Activated CD4-positive, alpha-beta T cell treated with anti-CD3 and anti-CD28 coated beads, Interleukin-2, amount 10 ng/mL, durations not matched to agents 24 days and 14 days (primary cell): ENCODE measurements at regions of chr11 and their contacts with region 1.

Region 1: GRCh38 chr11:16820324-16821092 is 82.1 kb downstream of the C11orf58 start:
- DNase-seq: peak; percentile 77
- H3K4me3 Mint-ChIP-seq: no peak overlapping the region
- H3K27ac Mint-ChIP-seq: no peak overlapping the region
- H3K4me1 Mint-ChIP-seq: peaks cover 10% of the 10 kb centered on the region
- H3K27me3 Mint-ChIP-seq: no peaks in the 10 kb centered on the region

Region 2: DNA sequence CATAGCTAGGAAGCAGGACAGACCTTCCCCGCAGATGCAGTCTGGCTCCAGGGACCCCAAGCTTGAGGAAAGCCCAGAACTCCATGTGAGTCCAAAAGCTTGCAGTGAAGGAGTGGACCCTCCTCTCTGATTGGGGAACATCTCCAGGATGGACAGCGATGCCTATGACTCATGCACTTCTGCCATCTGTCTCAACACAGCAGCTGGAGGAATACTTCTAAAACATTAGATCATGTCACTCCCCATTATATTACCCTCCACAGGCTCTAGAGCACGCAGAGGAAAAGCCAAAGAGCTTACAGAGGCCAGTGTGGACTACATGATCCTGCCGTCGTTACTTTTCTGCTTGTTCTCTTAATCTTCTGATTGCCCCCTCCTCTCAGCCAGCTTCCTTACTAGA is 1100.0 kb before region 1 on chr11:
- intact Hi-C with region 1: no loop called
- DNase-seq: no peak
- H3K4me3 Mint-ChIP-seq: no peak overlapping the region
- H3K27ac Mint-ChIP-seq: no peak overlapping the region
- H3K4me1 Mint-ChIP-seq: no peaks in the 10 kb centered on the region
- H3K27me3 Mint-ChIP-seq: no peaks in the 10 kb centered on the region

Region 3: DNA sequence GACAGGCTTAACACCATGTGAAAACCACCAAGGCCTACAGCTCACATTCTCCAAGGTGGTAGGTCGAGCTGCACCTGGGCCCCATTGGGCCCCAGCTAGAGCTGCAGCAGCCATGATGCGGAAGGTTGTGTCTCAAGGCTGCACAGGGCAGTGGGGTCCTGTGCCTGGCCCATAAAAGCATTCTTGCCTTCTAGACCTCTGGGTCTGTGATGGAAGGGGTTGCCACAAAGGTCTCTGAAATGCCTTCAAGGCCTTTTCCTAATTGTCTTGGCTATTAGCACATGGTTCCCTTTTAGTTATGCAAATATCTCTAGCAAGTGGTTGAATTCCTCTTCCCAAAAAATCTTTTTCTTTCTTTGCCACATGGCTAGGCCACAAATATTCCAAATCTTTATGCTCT is 134.6 kb before region 1 on chr11:
- intact Hi-C with region 1: no loop called
- DNase-seq: no peak
- H3K4me3 Mint-ChIP-seq: no peak overlapping the region
- H3K27ac Mint-ChIP-seq: no peak overlapping the region
- H3K4me1 Mint-ChIP-seq: no peaks in the 10 kb centered on the region
- H3K27me3 Mint-ChIP-seq: peaks cover 2% of the 10 kb centered on the region

Region 4: DNA sequence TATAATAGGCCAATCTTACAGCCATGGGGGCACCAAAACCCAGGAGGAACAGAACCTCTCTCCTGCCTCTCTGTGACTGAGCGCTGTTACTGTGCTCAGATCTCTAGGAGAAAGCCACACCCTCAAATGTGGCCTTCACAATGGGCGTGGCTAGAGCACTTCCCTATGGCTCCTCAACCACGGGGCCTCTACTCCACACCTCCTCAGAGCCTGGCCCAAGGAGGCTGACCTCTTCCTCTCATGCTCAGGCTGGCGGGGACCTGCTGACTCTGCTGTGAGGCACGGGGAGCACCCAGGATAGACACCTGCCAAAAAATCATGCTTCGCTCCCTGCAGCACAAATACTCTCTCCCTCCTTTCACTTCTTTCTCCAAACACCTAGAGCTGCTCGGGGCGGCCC is 41.1 kb before region 1 on chr11:
- intact Hi-C with region 1: no loop called
- DNase-seq: no peak
- H3K4me3 Mint-ChIP-seq: no peak overlapping the region
- H3K27ac Mint-ChIP-seq: no peak overlapping the region
- H3K4me1 Mint-ChIP-seq: no peaks in the 10 kb centered on the region
- H3K27me3 Mint-ChIP-seq: peaks cover 2% of the 10 kb centered on the region

Region 5: GRCh38 chr11:16924826-16925560 is 104.5 kb after region 1 on chr11:
- intact Hi-C with region 1: loop called (anchors 1 kb)
- DNase-seq: no peak
- H3K4me3 Mint-ChIP-seq: peak overlapping the region; percentile 89
- H3K27ac Mint-ChIP-seq: no peak overlapping the region
- H3K4me1 Mint-ChIP-seq: peaks cover 17% of the 10 kb centered on the region
- H3K27me3 Mint-ChIP-seq: peaks cover 46% of the 10 kb centered on the region